SK-N-SH (cell line): ENCODE measurements at regions of chr17 and their contacts with region 1.

Region 1: GRCh38 chr17:74176546-74177001 is 26.9 kb upstream of the RPL38 start:
- DNase-seq: peak; percentile 91
- H3K4me3 ChIP-seq: peak overlapping the region in 1 of 2 experiments; percentile 18; a peak in 1 of 4 replicates
- H3K27ac ChIP-seq: no peak overlapping the region
- H3K4me1 ChIP-seq: peaks cover 0 to 10% of the 10 kb centered on the region in 2 experiments; a peak in 1 of 4 replicates
- H3K27me3 ChIP-seq: no peaks in the 10 kb centered on the region
- CTCF ChIP-seq: peak; percentile 94
- EP300 ChIP-seq: no peak
- RAD21 ChIP-seq: peak; percentile 100

Region 2: DNA sequence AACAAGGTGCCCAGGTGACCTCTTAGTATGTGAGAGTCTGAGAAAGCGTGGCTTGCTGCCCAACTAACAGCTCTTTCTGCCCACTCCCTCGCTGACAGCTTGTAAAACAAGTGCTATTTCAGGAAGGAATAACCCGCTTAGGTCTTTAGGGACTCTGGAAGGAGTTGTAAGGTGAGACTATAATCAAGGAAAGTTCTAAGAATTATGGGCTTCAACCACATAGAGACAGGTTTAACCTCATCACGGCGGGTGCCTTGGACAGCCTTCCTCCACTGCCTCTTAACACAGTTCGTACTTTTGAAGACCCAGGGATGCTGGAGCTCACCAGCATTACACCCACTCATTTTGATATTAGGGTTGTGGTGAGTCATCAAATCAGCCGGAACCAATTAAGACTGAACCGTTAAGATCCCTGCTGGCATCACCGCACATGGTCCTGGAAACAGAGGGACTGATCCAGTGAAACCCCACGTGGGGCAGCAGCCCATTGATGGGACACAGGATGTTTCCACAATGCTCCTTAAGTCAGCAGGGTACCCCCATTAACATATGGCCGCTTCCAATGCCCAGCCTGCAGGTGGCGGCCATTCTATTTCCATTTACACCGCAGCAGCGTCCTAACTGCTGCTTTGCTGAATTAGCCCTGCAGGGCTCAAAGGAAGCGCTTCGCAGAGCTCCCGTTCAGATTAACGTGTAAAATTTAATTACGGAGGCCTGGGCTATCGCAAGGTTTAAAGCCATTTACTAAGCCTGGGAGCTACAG is 355.7 kb before region 1 on chr17:
- CTCF ChIA-PET with region 1: interaction called, 23 read pairs
- POLR2A ChIA-PET with region 1: no interaction called
- DNase-seq: peak; percentile 85
- H3K4me3 ChIP-seq: no peak overlapping the region
- H3K27ac ChIP-seq: peak overlapping the region in 1 of 2 experiments; percentile 77; a peak in 2 of 4 replicates
- H3K4me1 ChIP-seq: peaks cover 0 to 34% of the 10 kb centered on the region in 2 experiments; a peak in 2 of 4 replicates
- H3K27me3 ChIP-seq: no peaks in the 10 kb centered on the region
- CTCF ChIP-seq: no peak
- EP300 ChIP-seq: peak in 1 of 2 experiments; percentile 89; a peak in 2 of 4 replicates
- RAD21 ChIP-seq: peak; percentile 65

Region 3: DNA sequence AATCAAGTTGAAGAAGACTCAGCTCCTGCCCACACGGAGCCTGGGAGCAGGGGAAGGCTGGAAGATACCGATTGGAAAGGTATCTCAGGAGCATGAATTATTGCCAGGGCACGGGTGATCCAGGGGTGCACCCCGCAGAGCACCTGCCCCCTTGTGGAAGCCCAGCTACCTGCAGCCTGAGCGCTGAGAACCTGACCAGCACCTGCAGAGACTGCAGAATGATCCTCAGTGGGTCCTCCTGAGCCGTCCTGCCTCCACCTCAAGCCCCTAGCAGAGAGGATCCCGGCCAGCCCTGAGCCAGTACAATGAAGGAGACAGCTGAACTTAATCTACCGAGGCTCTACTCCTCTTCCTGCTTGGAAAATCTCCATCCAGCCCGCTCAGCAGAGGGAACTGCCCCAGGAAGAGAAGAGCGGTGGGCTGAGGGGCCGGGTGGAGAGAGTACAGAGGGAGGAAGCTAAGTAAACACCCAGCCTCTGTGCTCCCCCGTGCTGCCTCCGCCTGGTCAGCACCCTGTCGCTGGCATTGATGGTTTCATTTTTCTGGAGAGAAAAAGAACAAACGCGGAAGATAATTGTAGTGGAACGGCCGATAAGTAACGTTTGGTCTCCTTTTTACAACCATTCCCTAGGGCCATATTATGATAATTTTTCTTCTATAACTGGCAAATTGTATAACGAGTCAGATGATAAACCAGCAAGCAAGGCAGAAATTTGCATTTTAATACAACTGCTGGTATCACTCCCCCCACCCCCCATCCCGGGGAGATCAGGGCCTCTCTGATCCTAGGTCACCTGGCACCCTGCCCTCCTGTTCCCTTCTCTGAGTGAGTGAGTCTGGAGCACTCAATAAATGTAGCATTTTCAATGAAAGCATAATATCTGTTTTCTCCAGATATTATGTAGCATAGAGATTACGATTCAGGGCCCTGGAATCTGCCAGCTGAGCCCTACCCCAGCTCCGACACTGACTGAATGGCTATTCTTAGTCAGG is 177.6 kb before region 1 on chr17:
- CTCF ChIA-PET with region 1: interaction called, 32 read pairs
- POLR2A ChIA-PET with region 1: no interaction called
- DNase-seq: peak; percentile 82
- H3K4me3 ChIP-seq: peak overlapping the region in 1 of 2 experiments; percentile 23; a peak in 1 of 4 replicates
- H3K27ac ChIP-seq: no peak overlapping the region
- H3K4me1 ChIP-seq: no peaks in the 10 kb centered on the region; a peak in 1 of 4 replicates
- H3K27me3 ChIP-seq: no peaks in the 10 kb centered on the region
- CTCF ChIP-seq: peak; percentile 25; the same call in 1 of the 2 replicates
- EP300 ChIP-seq: no peak
- RAD21 ChIP-seq: peak; percentile 73

Region 4: DNA sequence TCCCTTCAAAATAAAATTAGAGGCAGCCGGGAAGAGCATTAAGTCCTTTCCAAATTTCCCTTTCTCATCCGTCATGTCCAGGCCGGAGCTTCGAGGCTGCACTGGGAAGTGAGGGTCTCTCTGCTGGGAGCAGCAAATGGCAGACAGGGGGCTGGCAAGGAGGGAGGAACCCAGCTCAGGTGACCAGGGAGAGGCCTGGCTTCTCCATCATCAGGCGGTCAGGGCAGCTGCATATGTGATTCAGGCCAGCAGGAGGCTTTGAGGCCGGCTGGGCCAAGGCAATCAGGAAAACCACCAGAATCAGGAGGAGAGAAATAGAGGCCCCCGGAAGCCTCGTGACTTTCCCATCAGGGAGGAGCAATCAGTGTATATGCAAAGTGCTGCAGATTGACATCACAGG is 58.1 kb before region 1 on chr17:
- CTCF ChIA-PET with region 1: interaction called, 19 read pairs
- POLR2A ChIA-PET with region 1: no interaction called
- DNase-seq: peak; percentile 71
- H3K4me3 ChIP-seq: no peak overlapping the region
- H3K27ac ChIP-seq: no peak overlapping the region
- H3K4me1 ChIP-seq: peaks cover 0 to 17% of the 10 kb centered on the region in 2 experiments; a peak in 1 of 4 replicates
- H3K27me3 ChIP-seq: no peaks in the 10 kb centered on the region
- CTCF ChIP-seq: no peak
- EP300 ChIP-seq: no peak
- RAD21 ChIP-seq: 0 out of 2 replicates have a peak, but pooled peaks have one; percentile 18

Region 5: GRCh38 chr17:74165797-74166365 is 10.7 kb before region 1 on chr17:
- CTCF ChIA-PET with region 1: interaction called, 13 read pairs
- POLR2A ChIA-PET with region 1: no interaction called
- DNase-seq: no peak
- H3K4me3 ChIP-seq: no peak overlapping the region
- H3K27ac ChIP-seq: no peak overlapping the region
- H3K4me1 ChIP-seq: no peaks in the 10 kb centered on the region
- H3K27me3 ChIP-seq: no peaks in the 10 kb centered on the region
- CTCF ChIP-seq: no peak
- EP300 ChIP-seq: no peak
- RAD21 ChIP-seq: no peak